Activated CD4-positive, alpha-beta T cell treated with anti-CD3 and anti-CD28 coated beads, Interleukin-2, amount 10 ng/mL, durations not matched to agents 24 days and 14 days (primary cell): ENCODE measurements at regions of chr1 and their contacts with region 1.

Region 1: GRCh38 chr1:172089768-172090510 is 248.6 kb downstream of the DNM3 start:
- DNase-seq: peak; percentile 86
- H3K4me3 Mint-ChIP-seq: no peak overlapping the region
- H3K27ac Mint-ChIP-seq: no peak overlapping the region
- H3K4me1 Mint-ChIP-seq: peaks cover 7% of the 10 kb centered on the region
- H3K27me3 Mint-ChIP-seq: no peaks in the 10 kb centered on the region

Region 2: DNA sequence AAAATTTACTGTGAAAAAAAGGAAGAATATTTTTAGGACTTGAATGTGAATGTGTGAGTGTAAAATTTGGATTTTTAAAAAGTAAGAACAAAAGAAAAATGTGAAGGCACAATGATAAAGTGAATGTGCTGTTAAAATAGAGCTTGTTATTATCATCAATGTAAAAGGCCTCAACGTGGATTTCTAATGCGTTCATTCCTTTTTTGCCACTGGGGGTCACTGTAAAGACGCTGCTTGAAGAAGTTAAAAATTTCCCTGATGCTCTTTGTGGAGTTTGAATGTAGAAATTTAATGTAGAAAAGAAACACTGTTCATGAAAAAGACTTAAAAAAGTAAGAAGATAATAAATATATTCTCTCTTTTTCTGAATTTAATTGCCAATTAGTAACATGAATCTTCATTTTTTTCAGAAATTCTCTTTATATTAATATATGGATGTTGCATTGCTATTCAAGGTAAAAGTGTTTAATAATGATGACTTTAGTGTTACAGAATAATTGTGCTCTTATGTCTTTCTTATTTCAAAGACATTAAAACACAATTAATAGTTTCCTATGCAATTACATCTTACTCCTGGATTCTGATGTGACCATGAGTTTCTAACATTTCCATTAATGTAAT is 87.1 kb before region 1 on chr1:
- intact Hi-C with region 1: loop called (anchors 5 kb)
- DNase-seq: peak; percentile 80
- H3K4me3 Mint-ChIP-seq: no peak overlapping the region
- H3K27ac Mint-ChIP-seq: no peak overlapping the region
- H3K4me1 Mint-ChIP-seq: peaks cover 3% of the 10 kb centered on the region
- H3K27me3 Mint-ChIP-seq: peaks cover under 1% of the 10 kb centered on the region

Region 3: GRCh38 chr1:172041742-172042141 is 48.2 kb before region 1 on chr1:
- intact Hi-C with region 1: no loop called
- DNase-seq: no peak
- H3K4me3 Mint-ChIP-seq: no peak overlapping the region
- H3K27ac Mint-ChIP-seq: no peak overlapping the region
- H3K4me1 Mint-ChIP-seq: peaks cover 3% of the 10 kb centered on the region
- H3K27me3 Mint-ChIP-seq: peaks cover 4% of the 10 kb centered on the region

Region 4: DNA sequence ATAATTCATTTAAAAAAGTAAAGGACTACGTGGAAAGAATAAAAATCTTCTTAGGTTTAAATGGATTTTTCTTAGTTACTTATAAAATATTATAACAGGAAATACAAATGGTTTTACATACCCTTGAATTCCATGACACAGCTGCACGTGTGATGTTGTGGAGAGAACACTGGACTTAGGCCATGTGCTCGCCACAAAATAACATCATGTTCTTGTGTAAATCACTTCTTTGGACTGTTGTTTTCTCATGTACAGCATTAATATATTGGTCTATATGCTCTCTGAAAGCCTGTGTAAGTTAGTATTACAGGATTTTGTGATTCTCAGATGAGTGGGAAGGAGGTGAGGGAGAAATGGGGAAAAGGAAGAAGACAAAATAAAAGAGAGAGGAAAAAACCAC is 20.4 kb before region 1 on chr1:
- intact Hi-C with region 1: no loop called
- DNase-seq: no peak
- H3K4me3 Mint-ChIP-seq: no peak overlapping the region
- H3K27ac Mint-ChIP-seq: no peak overlapping the region
- H3K4me1 Mint-ChIP-seq: peaks cover 2% of the 10 kb centered on the region
- H3K27me3 Mint-ChIP-seq: no peaks in the 10 kb centered on the region

Region 5: DNA sequence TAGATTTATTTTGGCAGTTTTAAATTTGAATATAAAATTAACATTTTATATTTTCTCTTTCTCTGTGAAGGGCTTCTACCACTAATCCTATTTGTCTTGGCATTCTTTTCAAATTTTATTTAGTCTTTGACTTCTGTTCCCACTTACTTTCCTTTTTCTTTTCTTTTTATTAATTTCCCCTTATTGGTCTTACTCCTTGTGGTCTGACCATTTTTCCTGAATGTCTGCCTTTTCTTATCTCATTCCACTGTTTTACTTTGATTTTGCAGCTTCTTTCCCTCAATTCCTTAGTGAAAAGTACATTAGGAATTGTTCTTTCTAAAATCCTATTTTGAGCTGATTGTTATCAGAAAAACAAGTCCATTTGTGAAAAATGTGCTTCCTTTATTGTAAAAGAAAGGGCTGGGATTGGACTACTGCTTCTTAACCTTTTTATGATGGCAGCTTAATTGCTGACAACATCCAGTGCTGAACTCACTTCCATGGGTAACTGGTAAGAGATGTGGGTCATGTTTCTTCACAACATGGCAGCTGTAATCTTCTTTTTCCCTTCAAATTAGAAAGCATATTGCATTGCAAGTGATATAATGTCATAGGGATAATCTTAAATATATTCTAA is 36.0 kb after region 1 on chr1:
- intact Hi-C with region 1: no loop called
- DNase-seq: no peak
- H3K4me3 Mint-ChIP-seq: no peak overlapping the region
- H3K27ac Mint-ChIP-seq: no peak overlapping the region
- H3K4me1 Mint-ChIP-seq: no peaks in the 10 kb centered on the region
- H3K27me3 Mint-ChIP-seq: no peaks in the 10 kb centered on the region

Region 6: DNA sequence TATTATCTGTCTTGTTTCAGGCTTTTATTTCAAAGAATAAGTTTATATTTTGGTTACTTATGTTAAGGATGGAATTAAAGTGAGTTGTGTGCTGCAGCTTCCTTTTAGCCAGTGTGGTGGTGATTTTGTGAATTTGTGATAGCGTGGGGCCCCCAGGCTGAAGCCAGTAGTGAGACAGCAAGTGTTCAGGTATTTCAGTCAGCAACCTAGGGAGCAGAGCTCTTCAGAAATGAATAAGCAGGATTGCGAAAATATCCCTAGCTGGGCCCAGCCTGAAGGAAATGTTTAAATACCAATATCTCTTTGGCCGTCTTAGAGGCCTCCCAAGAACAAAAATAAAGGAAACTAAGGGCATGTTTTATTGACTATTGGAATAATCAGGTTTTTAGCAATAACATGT is 179.7 kb after region 1 on chr1:
- intact Hi-C with region 1: loop called (anchors 5 kb)
- DNase-seq: no peak
- H3K4me3 Mint-ChIP-seq: peak overlapping the region; percentile 29
- H3K27ac Mint-ChIP-seq: peak overlapping the region; percentile 88
- H3K4me1 Mint-ChIP-seq: peaks cover 44% of the 10 kb centered on the region
- H3K27me3 Mint-ChIP-seq: no peaks in the 10 kb centered on the region

Region 7: GRCh38 chr1:172429331-172430127 is 339.6 kb after region 1 on chr1:
- intact Hi-C with region 1: loop called (anchors 1 kb)
- DNase-seq: peak; percentile 82
- H3K4me3 Mint-ChIP-seq: no peak overlapping the region
- H3K27ac Mint-ChIP-seq: no peak overlapping the region
- H3K4me1 Mint-ChIP-seq: peaks cover 26% of the 10 kb centered on the region
- H3K27me3 Mint-ChIP-seq: no peaks in the 10 kb centered on the region